ENCODE measurements at regions of chr6 and their contacts with region 1.

Region 1: DNA sequence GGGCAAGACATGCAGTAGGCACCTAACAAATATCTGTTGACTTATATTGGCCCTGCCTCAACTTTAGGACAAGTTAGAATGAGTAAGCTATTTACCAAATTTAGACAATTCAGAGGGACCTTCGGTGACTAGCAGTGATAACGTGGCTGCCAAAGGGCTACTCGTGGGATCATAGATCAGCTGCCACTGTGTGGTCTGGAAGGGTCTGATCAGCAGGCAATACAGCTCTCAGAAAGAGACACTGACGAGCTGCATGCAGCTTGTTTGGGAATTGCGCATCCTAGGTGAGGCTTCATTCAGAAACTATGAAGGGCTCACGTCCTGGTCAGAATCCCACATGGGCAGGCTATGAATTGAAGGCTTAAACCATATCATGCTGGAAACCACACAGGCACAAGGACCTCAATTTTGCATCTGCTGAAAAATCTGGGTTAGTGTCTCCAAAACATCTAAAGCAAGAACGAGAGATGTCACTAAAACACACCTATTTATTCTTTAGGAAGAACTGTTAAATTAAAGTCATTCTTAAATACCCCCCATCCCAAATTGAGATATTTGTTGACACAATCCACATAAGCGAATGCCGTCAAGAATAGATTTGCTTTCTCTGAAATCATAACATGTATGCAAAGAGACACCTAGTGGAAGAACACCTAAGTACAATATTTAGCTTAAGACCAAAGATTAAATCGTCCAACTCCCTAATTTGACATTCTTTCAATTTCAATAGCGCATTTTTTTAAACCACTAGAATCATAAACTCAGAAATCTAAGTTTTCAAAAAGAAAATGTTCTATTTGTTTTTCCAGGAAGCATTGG is 79.6 kb downstream of the IPCEF1 start:
- DNase-seq: no peak
- H3K4me3 ChIP-seq: no peak overlapping the region
- H3K27ac ChIP-seq: no peak overlapping the region
- H3K27me3 ChIP-seq: no peaks in the 10 kb centered on the region
- CTCF ChIP-seq: peak; percentile 60

Region 2: DNA sequence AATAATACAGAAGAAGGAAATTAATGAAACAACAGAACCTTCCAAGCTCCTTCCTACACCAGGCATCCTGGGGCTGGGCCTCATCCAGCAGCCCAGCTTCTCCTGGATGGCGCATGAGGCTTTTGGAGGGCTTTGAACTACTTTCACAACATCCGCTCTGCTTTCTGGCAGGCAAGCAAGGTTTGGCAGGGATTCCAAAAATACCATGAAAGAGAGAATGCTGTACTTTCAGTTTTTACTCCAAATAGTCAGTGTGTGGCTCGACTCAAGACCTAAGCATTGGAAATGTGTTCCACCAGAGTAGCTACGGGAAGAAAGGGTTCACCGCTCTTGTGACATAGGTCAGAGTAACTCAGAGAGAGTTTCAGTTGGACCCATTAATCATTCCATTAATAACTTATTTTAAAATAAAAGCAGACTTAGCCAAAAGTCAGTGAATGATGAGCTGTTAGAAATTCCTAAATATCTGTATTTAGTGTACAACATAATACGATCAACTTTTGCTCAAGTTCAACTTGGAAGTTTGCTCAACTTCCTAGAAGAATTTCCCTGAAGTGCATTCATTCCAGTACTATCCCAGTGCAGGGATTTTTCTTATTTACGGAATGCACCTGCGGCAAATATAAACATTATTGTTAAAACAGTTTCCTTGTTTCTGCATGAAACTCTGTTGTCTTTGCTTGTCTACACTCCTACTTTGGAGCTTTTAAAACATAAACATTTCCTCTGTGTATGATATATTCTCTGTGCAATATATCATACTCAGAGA is 112.4 kb before region 1 on chr6:
- CTCF ChIA-PET with region 1: interaction called, 15 read pairs
- POLR2A ChIA-PET with region 1: no interaction called
- DNase-seq: peak; percentile 70
- H3K4me3 ChIP-seq: peak overlapping the region; percentile 38
- H3K27ac ChIP-seq: no peak overlapping the region
- H3K27me3 ChIP-seq: no peaks in the 10 kb centered on the region
- CTCF ChIP-seq: no peak

Region 3: GRCh38 chr6:154306696-154307095 is 29.7 kb after region 1 on chr6:
- CTCF ChIA-PET with region 1: no interaction called
- POLR2A ChIA-PET with region 1: no interaction called
- DNase-seq: no peak
- H3K4me3 ChIP-seq: no peak overlapping the region
- H3K27ac ChIP-seq: no peak overlapping the region
- H3K27me3 ChIP-seq: no peaks in the 10 kb centered on the region
- CTCF ChIP-seq: no peak

Region 4: GRCh38 chr6:154370545-154370944 is 93.5 kb after region 1 on chr6:
- CTCF ChIA-PET with region 1: interaction called, 12 read pairs
- POLR2A ChIA-PET with region 1: no interaction called
- DNase-seq: no peak
- H3K4me3 ChIP-seq: no peak overlapping the region
- H3K27ac ChIP-seq: no peak overlapping the region
- H3K27me3 ChIP-seq: no peaks in the 10 kb centered on the region
- CTCF ChIP-seq: peak; percentile 53

Measured in AG04450 (cell line).